ENCODE measurements at regions of chr22 and their contacts with region 1.

Region 1: GRCh38 chr22:23925020-23925606 is 30.9 kb downstream of the MIF start:
- DNase-seq: no peak
- ATAC-seq: no peak
- H3K4me3 ChIP-seq: no peak overlapping the region
- H3K27ac ChIP-seq: no peak overlapping the region
- H3K4me1 ChIP-seq: no peaks in the 10 kb centered on the region
- H3K27me3 ChIP-seq: no peaks in the 10 kb centered on the region
- CTCF ChIP-seq: no peak
- POLR2A ChIP-seq: no peak

Region 2: GRCh38 chr22:23970816-23971486 is 45.8 kb after region 1 on chr22:
- intact Hi-C with region 1: loop called in 5 of 10 experiments (anchors 5 kb)
- DNase-seq: peak in 1 of 5 donors; percentile 24
- ATAC-seq: no peak
- H3K4me3 ChIP-seq: no peak overlapping the region
- H3K27ac ChIP-seq: no peak overlapping the region
- H3K4me1 ChIP-seq: peaks cover 0 to 22% (median 1%) of the 10 kb centered on the region in 12 donors
- H3K27me3 ChIP-seq: no peaks in the 10 kb centered on the region
- CTCF ChIP-seq: no peak
- POLR2A ChIP-seq: no peak

Region 3: DNA sequence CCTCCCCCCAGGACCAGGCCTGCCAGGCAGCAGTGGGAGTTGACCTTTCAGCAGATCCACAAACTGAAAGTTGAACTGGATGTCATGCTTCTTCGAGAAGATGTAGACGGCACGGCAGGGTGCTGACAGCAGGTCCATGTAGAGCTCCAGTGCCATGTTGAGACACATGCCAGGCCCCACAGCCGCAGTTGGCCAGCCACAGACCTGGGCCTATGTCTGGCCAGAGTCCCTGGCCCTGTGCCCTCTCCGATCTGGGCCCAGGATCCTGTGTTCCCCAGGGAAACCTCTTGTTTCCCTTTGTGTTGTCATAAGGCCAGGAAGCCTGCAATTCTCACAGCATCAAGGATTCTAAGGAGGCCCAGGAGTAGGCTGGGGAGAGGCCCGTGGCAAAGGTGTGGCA is 80.1 kb after region 1 on chr22 and contains the start of gene GSTT4:
- intact Hi-C with region 1: no loop called
- DNase-seq: peak; percentile 72 to 96 (median 87)
- ATAC-seq: peak; percentile 92 to 98 (median 96)
- H3K4me3 ChIP-seq: no peak within 1 kb of the TSS
- H3K27ac ChIP-seq: peak within 1 kb of the TSS in 10 of 12 donors; percentile 13 to 74 (median 57)
- H3K4me1 ChIP-seq: peaks cover 0 to 17% (median 7%) of the 10 kb centered on the region in 12 donors
- H3K27me3 ChIP-seq: no peaks in the 10 kb centered on the region
- CTCF ChIP-seq: no peak
- POLR2A ChIP-seq: no peak
- total RNA-seq, gene GSTT4: not detected

Region 4: GRCh38 chr22:24060375-24060788 is 135.3 kb after region 1 on chr22:
- intact Hi-C with region 1: no loop called
- DNase-seq: peak in 1 of 5 donors; percentile 31
- ATAC-seq: peak; percentile 49 to 79 (median 75)
- H3K4me3 ChIP-seq: no peak overlapping the region
- H3K27ac ChIP-seq: peak overlapping the region in 5 of 12 donors; percentile 3 to 60 (median 42)
- H3K4me1 ChIP-seq: peaks cover 0 to 29% (median 17%) of the 10 kb centered on the region in 12 donors
- H3K27me3 ChIP-seq: no peaks in the 10 kb centered on the region
- CTCF ChIP-seq: no peak
- POLR2A ChIP-seq: no peak

Region 5: DNA sequence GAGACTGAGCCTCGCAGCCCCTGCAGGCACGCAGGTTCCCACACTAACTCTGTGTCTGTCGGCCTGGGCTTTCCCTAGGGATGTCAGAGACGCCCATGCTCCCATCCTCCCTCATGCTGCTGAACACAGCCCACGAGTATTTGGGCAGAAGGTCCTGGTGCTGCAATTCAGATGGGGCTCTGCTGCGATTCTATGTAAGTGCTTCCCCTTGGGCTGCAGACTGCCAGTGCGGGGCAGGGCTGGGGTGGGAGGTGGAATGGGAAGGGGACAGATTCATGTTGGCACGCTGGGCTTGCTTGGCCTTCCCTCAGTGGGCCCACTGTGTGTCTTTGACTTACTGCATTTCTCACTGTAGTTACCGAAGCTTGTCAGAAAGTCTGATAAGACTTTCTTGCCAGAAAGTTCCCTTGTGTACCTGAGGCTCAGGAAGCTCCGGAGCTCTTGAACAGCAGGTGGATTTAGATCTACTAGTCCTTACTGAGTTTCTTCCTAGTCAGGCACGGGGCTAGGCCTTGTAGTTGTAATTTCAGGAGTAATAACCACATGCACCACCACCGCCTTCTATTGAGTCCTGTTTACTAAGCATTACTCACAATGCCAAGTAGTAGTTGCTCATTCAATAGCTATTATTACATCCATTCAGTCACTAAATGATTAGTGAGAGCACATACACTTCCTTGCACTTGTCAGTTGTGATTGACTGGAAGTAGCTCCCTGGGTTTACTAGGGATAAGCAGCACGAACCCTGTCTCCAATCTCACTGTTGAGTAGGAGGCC is 151.2 kb after region 1 on chr22:
- intact Hi-C with region 1: no loop called
- DNase-seq: no peak
- ATAC-seq: no peak
- H3K4me3 ChIP-seq: no peak overlapping the region
- H3K27ac ChIP-seq: peak overlapping the region in 5 of 12 donors; percentile 23 to 83 (median 74)
- H3K4me1 ChIP-seq: peaks cover 0 to 16% (median 0%) of the 10 kb centered on the region in 12 donors
- H3K27me3 ChIP-seq: no peaks in the 10 kb centered on the region
- CTCF ChIP-seq: no peak
- POLR2A ChIP-seq: no peak